ENCODE measurements at regions of chr15 and their contacts with region 1.

Region 1: DNA sequence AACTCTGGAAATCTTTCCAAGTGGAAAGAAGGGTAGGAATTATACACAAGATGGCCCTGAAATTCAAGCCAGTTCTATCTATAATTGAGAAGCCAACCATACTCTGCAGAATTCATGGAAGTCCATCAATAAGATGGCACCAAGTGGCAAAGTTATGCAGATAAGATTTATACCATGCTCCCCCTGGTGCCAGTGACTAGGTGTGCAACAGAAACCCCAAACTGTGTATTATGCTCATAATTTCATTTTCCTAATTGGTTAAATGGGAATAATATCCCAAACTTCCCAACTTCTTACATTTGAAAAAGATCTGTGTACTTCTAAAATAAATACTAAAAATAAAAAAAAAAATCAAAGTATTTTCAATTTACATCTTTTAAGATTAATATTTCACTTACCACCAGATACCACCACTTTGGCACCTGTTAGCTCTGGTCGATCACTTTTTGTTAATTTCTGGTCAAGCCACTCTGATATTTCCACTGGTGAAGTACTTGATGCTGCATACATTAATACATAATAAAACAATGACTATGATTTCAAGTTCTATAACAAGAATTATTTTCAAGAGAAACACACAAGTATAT is 25.9 kb downstream of the ETFA start:
- DNase-seq: peak in 2 of 9 experiments; percentile 18 to 46
- ATAC-seq: peak; percentile 29
- H3K4me3 ChIP-seq: no peak overlapping the region
- H3K4me3 Mint-ChIP-seq: no peak overlapping the region
- H3K27ac ChIP-seq: peak overlapping the region in 1 of 2 experiments; percentile 76
- H3K27ac Mint-ChIP-seq: no peak overlapping the region
- H3K4me1 ChIP-seq: peaks cover 11% of the 10 kb centered on the region
- H3K4me1 Mint-ChIP-seq: peaks cover 37% of the 10 kb centered on the region
- H3K27me3 ChIP-seq: no peaks in the 10 kb centered on the region
- H3K27me3 Mint-ChIP-seq: no peaks in the 10 kb centered on the region
- CTCF ChIP-seq: peak; percentile 61

Region 2: DNA sequence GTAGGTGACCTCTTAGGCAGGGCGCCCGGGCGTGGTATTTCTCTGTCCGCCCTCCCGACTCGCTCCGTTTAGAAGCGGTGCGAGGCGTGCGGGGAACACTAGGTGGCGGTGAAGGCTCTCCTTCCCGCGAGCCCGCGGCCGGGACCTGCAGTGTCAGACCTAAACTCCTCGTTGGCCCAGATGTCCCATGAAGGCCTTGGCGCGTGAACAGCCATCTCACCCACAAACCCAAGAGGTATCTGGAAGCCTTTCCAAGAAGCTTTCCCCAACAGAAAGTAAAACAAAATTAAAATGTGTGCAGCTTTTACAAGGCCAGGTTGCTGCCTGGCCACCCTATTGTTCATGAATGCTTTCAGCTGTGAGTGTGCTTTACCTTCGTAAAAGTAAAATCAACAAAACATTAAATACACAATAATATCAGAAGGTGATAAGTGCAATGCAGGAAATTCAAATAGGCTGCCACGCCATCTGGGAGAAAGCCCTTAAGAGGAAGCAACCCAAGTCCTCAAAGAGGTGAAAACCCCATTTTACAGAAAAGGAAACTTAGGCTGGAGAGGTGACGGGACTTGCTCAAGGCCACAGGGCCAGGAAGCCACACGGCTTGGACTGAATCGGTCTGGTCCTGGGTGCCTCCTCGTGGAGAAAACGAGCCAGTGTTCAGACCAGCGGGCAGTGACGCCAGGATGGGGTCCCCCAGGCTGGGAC is 94.3 kb before region 1 on chr15:
- CTCF ChIA-PET with region 1: no interaction called
- POLR2A ChIA-PET with region 1: no interaction called
- intact Hi-C with region 1: loop called in 1 of 2 experiments (anchors 1 kb)
- DNase-seq: peak; percentile 28 to 78 (median 65)
- ATAC-seq: peak; percentile 77
- H3K4me3 ChIP-seq: no peak overlapping the region
- H3K4me3 Mint-ChIP-seq: peak overlapping the region; percentile 71
- H3K27ac ChIP-seq: no peak overlapping the region
- H3K27ac Mint-ChIP-seq: no peak overlapping the region
- H3K4me1 ChIP-seq: peaks cover 10% of the 10 kb centered on the region
- H3K4me1 Mint-ChIP-seq: peaks cover 14% of the 10 kb centered on the region
- H3K27me3 ChIP-seq: peaks cover 0 to 5% of the 10 kb centered on the region in 2 experiments
- H3K27me3 Mint-ChIP-seq: peaks cover 48% of the 10 kb centered on the region
- CTCF ChIP-seq: peak; percentile 62

Region 3: DNA sequence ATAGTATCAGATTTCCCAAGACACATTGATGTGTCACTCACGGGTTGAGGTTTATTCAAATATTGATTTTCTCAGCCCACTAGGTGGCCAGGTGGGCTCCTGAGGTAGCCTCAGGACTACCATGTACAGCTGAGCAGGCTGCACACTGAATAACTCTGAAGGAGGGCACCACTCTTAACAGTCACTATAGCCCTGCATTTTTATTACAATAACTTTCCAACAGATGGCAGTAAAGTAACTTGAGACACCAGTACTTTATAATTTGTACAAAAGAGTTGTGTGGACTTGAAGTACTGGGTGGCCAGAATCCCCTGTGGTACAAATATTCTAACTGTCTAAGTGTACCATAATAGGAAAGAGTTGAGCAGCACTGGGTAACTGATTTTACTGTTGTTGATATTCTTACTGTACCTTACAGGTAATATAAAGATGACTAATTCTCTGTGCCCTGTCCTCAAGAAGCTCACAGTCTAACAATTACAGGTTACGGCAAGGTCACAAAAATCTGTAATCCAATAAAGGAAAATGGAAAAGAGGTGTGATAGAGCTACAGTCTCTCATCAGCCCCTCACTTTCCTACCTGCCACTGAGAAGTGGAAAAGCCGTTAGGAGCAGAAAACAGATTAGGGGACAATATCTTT is 50.0 kb before region 1 on chr15:
- CTCF ChIA-PET with region 1: interaction called, 4 read pairs
- POLR2A ChIA-PET with region 1: no interaction called
- intact Hi-C with region 1: loop called (anchors 2 to 5 kb)
- DNase-seq: peak in 2 of 9 experiments; percentile 29 to 54
- ATAC-seq: peak; percentile 36
- H3K4me3 ChIP-seq: no peak overlapping the region
- H3K4me3 Mint-ChIP-seq: no peak overlapping the region
- H3K27ac ChIP-seq: no peak overlapping the region
- H3K27ac Mint-ChIP-seq: no peak overlapping the region
- H3K4me1 ChIP-seq: no peaks in the 10 kb centered on the region
- H3K4me1 Mint-ChIP-seq: no peaks in the 10 kb centered on the region
- H3K27me3 ChIP-seq: no peaks in the 10 kb centered on the region
- H3K27me3 Mint-ChIP-seq: no peaks in the 10 kb centered on the region
- CTCF ChIP-seq: peak; percentile 56

Region 4: DNA sequence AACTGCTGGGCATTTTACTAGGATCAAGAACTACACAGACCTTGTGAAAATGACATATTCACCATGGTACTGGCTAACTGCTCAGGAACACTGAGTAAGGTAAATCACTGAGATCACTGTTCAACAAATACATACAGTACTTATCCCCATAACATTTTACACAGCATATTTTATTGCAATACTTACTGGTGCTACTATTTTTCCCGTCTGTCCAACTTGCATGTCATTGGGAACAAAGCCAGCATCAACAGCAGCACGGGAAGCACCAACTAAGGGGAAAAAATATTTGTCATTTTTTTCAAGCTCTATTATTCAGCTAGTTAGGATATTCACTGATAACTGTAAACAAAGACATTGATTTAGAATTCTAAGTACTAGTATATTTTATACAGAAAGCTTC is 11.1 kb before region 1 on chr15:
- CTCF ChIA-PET with region 1: no interaction called
- POLR2A ChIA-PET with region 1: no interaction called
- intact Hi-C with region 1: loop called in 1 of 2 experiments (anchors 1 kb)
- DNase-seq: no peak
- ATAC-seq: no peak
- H3K4me3 ChIP-seq: no peak overlapping the region
- H3K4me3 Mint-ChIP-seq: no peak overlapping the region
- H3K27ac ChIP-seq: no peak overlapping the region
- H3K27ac Mint-ChIP-seq: no peak overlapping the region
- H3K4me1 ChIP-seq: no peaks in the 10 kb centered on the region
- H3K4me1 Mint-ChIP-seq: no peaks in the 10 kb centered on the region
- H3K27me3 ChIP-seq: no peaks in the 10 kb centered on the region
- H3K27me3 Mint-ChIP-seq: no peaks in the 10 kb centered on the region
- CTCF ChIP-seq: no peak

Region 5: GRCh38 chr15:76311100-76311953 is 26.0 kb after region 1 on chr15 and contains the start of gene ETFA:
- CTCF ChIA-PET with region 1: interaction called, 5 read pairs
- POLR2A ChIA-PET with region 1: interaction called, 4 read pairs
- intact Hi-C with region 1: loop called (anchors 1 to 2 kb)
- DNase-seq: peak; percentile 70 to 94 (median 86)
- ATAC-seq: peak; percentile 93
- H3K4me3 ChIP-seq: peak within 1 kb of the TSS; percentile 93 to 99
- H3K4me3 Mint-ChIP-seq: peak within 1 kb of the TSS; percentile 89
- H3K27ac ChIP-seq: peak within 1 kb of the TSS; percentile 64 to 89
- H3K27ac Mint-ChIP-seq: peak within 1 kb of the TSS; percentile 86
- H3K4me1 ChIP-seq: peaks cover 21% of the 10 kb centered on the region
- H3K4me1 Mint-ChIP-seq: peaks cover 38% of the 10 kb centered on the region
- H3K27me3 ChIP-seq: no peaks in the 10 kb centered on the region
- H3K27me3 Mint-ChIP-seq: peaks cover 3% of the 10 kb centered on the region
- CTCF ChIP-seq: no peak
- total RNA-seq, gene ETFA: 18.0 to 18.1 TPM

Measured in CD8-positive, alpha-beta T cell (primary cell).